Posterior cingulate gyrus (tissue), 11 donors: ENCODE measurements at regions of chr19 and their contacts with region 1.

Region 1: GRCh38 chr19:11781295-11782052 is 14.7 kb downstream of the ZNF441 start:
- DNase-seq: no peak

Region 2: GRCh38 chr19:11673608-11674041 is 107.8 kb before region 1 on chr19:
- intact Hi-C with region 1: loop called (anchors 10 kb)
- DNase-seq: peak; percentile 25 to 94 (median 66)

Region 3: DNA sequence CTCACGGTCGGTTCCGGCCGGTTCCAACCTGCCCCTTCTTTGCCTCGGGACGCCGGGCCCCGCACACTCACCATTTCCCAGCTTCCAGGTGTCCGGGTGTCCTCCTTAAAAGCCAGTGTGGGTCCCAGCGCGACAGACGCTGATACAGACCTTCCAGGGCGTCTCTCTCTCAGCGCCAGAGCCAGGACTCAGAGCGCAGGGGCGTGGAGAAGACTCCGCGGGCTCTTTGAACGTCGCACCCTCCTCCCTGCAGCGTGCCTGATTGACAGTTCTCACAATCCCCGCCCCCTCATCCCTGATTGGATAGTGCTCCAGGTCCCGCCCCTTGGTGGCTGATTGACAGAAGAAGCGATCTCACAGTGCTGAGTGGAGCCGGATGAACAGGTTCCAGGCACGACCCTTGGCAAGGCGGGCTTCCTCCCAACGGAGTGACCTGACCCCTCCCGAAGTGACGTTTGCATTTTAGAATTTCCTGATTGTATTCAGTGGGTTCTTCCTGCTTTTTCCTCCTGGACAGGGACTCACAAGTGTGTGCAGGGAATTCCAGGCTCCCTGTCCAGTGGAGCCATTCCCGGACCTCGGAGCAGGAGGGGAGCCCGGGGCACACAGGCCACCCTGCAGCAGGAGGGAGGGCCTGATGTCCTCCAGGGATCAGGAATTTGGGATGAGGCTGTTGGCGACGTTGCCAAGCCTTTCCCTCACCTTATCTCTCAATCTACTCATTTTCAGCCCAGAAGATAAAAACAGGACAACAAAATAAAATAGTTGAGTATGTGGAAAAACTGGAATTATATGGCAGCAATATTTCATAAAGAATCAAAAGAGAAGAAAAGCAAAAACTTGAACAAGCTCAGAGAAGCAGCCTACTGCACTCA is 42.5 kb before region 1 on chr19 and contains the start of gene ZNF823:
- intact Hi-C with region 1: no loop called
- DNase-seq: peak; percentile 95 to 100 (median 98)